ENCODE measurements at regions of chr22 and their contacts with region 1.

Region 1: GRCh38 chr22:22520020-22520656 is at the start of gene ZNF280A:
- DNase-seq: no peak
- H3K4me3 ChIP-seq: no peak within 1 kb of the TSS
- H3K27ac ChIP-seq: no peak within 1 kb of the TSS
- H3K4me1 ChIP-seq: no peaks in the 10 kb centered on the region
- H3K27me3 ChIP-seq: peaks cover 0 to 58% (median 9%) of the 10 kb centered on the region in 3 donors
- CTCF ChIP-seq: no peak
- EP300 ChIP-seq: no peak
- POLR2A ChIP-seq: no peak
- total RNA-seq, gene ZNF280A: not detected

Region 2: DNA sequence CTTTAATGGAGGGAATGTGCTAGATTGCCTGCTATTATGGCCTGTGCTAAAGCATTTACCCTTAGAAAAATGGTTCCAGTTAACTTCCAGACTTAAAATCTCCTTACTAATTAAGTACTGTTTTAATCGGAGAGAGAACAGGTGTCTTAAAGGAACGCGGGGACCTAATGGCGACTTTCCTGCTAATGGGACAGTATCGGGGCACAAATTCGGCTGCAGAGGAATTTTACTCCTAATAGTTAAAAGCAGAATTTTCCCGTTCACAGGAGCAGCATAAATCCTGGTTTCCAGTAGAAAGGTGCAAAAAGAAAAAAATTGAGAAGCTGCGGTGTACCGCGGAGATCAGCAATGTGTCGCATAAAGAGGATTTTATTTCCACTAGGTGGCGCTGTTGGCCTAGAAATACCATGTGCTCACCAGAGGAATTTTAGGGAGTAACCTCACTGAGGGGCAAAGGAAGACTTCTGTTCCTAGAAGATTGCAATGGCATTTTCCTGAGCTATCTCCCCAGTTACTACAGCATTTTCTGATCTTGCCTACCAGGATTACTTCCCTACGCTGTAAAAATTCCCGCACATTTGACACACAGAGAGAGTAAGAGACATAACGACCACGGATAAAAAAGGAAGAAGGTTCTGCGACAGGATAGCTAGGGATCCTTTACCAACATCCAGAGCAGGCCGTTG is 56.1 kb before region 1 on chr22:
- intact Hi-C with region 1: loop called (anchors 10 kb)
- DNase-seq: peak; percentile 35 to 84
- H3K4me3 ChIP-seq: no peak overlapping the region
- H3K27ac ChIP-seq: no peak overlapping the region
- H3K4me1 ChIP-seq: peaks cover 0 to 3% (median 0%) of the 10 kb centered on the region in 4 donors
- H3K27me3 ChIP-seq: peaks cover 0 to 55% (median 12%) of the 10 kb centered on the region in 3 donors
- CTCF ChIP-seq: peak in 4 of 7 experiments; percentile 21 to 73 (median 60)
- EP300 ChIP-seq: no peak
- POLR2A ChIP-seq: no peak

Region 3: GRCh38 chr22:22593964-22594656 is 74.0 kb after region 1 on chr22:
- intact Hi-C with region 1: no loop called
- DNase-seq: peak; percentile 30 to 74
- H3K4me3 ChIP-seq: no peak overlapping the region
- H3K27ac ChIP-seq: no peak overlapping the region
- H3K4me1 ChIP-seq: no peaks in the 10 kb centered on the region
- H3K27me3 ChIP-seq: peaks cover 0 to 28% (median 0%) of the 10 kb centered on the region in 3 donors
- CTCF ChIP-seq: peak in 4 of 7 experiments; percentile 18 to 46 (median 30)
- EP300 ChIP-seq: no peak
- POLR2A ChIP-seq: no peak

Measured in stomach (tissue), 19 donors.